ENCODE measurements at regions of chr5 and their contacts with region 1.

Region 1: GRCh38 chr5:126776497-126777256 is at the start of gene LMNB1:
- DNase-seq: peak; percentile 97
- H3K4me3 Mint-ChIP-seq: peak within 1 kb of the TSS; percentile 97
- H3K27ac Mint-ChIP-seq: peak within 1 kb of the TSS; percentile 99
- H3K4me1 Mint-ChIP-seq: peaks cover 14% of the 10 kb centered on the region
- H3K27me3 Mint-ChIP-seq: no peaks in the 10 kb centered on the region
- total RNA-seq, gene LMNB1: 212 to 215 TPM

Region 2: GRCh38 chr5:126676195-126676624 is 100.5 kb before region 1 on chr5:
- CTCF ChIA-PET with region 1: interaction called, 213 read pairs
- POLR2A ChIA-PET with region 1: interaction called, 22 read pairs
- intact Hi-C with region 1: loop called (anchors 1 kb)
- DNase-seq: peak; percentile 78
- H3K4me3 Mint-ChIP-seq: no peak overlapping the region
- H3K27ac Mint-ChIP-seq: peak overlapping the region; percentile 20
- H3K4me1 Mint-ChIP-seq: peaks cover 3% of the 10 kb centered on the region
- H3K27me3 Mint-ChIP-seq: no peaks in the 10 kb centered on the region

Region 3: GRCh38 chr5:126745259-126745992 is 31.3 kb before region 1 on chr5:
- CTCF ChIA-PET with region 1: interaction called, 17 read pairs
- POLR2A ChIA-PET with region 1: interaction called, 39 read pairs
- intact Hi-C with region 1: loop called (anchors 1 kb)
- DNase-seq: no peak
- H3K4me3 Mint-ChIP-seq: no peak overlapping the region
- H3K27ac Mint-ChIP-seq: no peak overlapping the region
- H3K4me1 Mint-ChIP-seq: peaks cover 30% of the 10 kb centered on the region
- H3K27me3 Mint-ChIP-seq: peaks cover 1% of the 10 kb centered on the region

Region 4: GRCh38 chr5:126801992-126802294 is 25.3 kb after region 1 on chr5:
- CTCF ChIA-PET with region 1: interaction called, 30 read pairs
- POLR2A ChIA-PET with region 1: interaction called, 7 read pairs
- intact Hi-C with region 1: no loop called
- DNase-seq: no peak
- H3K4me3 Mint-ChIP-seq: no peak overlapping the region
- H3K27ac Mint-ChIP-seq: no peak overlapping the region
- H3K4me1 Mint-ChIP-seq: peaks cover 40% of the 10 kb centered on the region
- H3K27me3 Mint-ChIP-seq: no peaks in the 10 kb centered on the region

Region 5: GRCh38 chr5:127030259-127031146 is 253.8 kb after region 1 on chr5 and contains the start of gene MARCHF3:
- CTCF ChIA-PET with region 1: interaction called, 5 read pairs
- POLR2A ChIA-PET with region 1: interaction called, 5 read pairs
- intact Hi-C with region 1: loop called (anchors 1 kb)
- DNase-seq: peak; percentile 96
- H3K4me3 Mint-ChIP-seq: peak within 1 kb of the TSS; percentile 89
- H3K27ac Mint-ChIP-seq: no peak within 1 kb of the TSS
- H3K4me1 Mint-ChIP-seq: peaks cover 16% of the 10 kb centered on the region
- H3K27me3 Mint-ChIP-seq: peaks cover 3% of the 10 kb centered on the region
- total RNA-seq, gene MARCHF3: 4.0 to 4.4 TPM

Region 6: DNA sequence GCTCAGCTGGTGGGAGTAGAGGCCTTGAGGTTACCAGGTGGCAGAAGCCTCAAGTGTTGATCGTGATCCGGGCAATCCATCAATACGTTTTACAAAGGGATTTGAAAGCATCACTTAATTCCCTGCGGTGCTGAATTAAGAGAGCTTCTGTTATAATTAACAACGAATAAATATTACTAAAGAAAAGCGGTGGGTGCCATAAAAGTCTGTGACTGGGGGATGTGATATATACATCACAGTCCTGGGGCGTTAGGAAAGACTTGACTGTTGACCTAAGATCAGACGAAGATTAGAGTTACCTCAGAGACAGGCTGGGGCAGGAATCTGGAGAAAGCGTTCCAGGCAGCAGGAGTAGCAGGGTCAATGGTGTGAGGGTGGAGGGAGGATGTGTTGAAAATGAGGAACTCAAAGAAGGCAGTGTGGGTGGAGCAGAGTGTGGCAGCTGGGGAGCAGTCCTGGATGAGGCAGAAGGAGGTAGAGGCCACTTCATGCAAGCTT is 303.4 kb after region 1 on chr5:
- CTCF ChIA-PET with region 1: no interaction called
- POLR2A ChIA-PET with region 1: no interaction called
- intact Hi-C with region 1: no loop called
- DNase-seq: no peak
- H3K4me3 Mint-ChIP-seq: no peak overlapping the region
- H3K27ac Mint-ChIP-seq: no peak overlapping the region
- H3K4me1 Mint-ChIP-seq: no peaks in the 10 kb centered on the region
- H3K27me3 Mint-ChIP-seq: no peaks in the 10 kb centered on the region